Right lobe of liver (tissue), 6 donors: ENCODE measurements at regions of chr5 and their contacts with region 1.

Region 1: GRCh38 chr5:175700991-175701390 is 43.1 kb downstream of the HRH2 start:
- DNase-seq: peak in 2 of 3 donors; percentile 18 to 33
- ATAC-seq: no peak
- H3K4me3 ChIP-seq: no peak overlapping the region
- H3K27ac ChIP-seq: no peak overlapping the region
- H3K4me1 ChIP-seq: no peaks in the 10 kb centered on the region
- H3K27me3 ChIP-seq: no peaks in the 10 kb centered on the region
- CTCF ChIP-seq: peak; percentile 27 to 38 (median 34)
- POLR2A ChIP-seq: no peak

Region 2: GRCh38 chr5:175393897-175394296 is 307.1 kb before region 1 on chr5:
- intact Hi-C with region 1: no loop called
- DNase-seq: no peak
- ATAC-seq: no peak
- H3K4me3 ChIP-seq: no peak overlapping the region
- H3K27ac ChIP-seq: no peak overlapping the region
- H3K4me1 ChIP-seq: no peaks in the 10 kb centered on the region
- H3K27me3 ChIP-seq: no peaks in the 10 kb centered on the region
- CTCF ChIP-seq: no peak
- POLR2A ChIP-seq: no peak

Region 3: DNA sequence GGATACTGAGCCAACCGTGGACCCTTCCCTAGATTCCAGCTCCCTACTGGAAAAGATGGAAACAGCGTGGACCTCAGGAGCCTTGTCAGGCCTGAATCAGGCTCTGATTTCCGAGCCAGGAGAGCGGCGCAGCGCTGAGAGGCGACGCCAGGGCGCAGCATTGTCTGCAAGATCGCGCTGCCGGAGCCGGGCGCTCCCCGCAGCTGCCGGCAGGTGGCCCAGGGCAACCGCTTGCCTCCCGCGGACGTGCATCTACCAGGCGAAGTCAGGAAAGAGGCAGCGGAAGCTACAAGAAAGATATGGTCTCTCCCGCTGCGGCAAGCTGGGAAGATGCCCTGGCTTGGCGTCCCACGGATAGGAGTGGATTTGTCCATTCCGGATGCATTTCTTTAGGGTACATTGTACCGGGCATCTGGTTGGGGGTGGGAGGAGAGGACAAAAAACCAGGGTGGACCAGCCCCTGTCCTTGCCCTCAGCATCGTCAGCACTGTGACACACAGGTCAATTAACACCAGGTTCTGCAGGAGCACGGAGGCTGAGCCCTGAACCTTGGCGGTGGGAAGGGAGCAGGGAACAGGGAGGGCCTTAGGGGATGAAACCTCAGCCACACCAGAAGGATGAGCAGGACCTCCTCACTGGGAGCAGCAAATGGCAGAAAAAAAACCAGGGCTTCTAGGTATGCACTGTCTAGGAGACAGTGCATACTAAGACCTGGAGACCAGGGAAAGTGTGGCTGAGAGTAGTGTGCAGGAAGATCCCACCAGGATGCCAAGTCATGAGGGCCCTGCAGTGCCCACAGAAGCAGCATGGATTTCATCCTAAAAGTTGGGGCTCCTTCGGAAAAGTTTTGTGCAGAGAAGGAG is 166.7 kb before region 1 on chr5:
- intact Hi-C with region 1: loop called in 1 of 2 experiments (anchors 10 kb)
- DNase-seq: peak; percentile 76 to 86 (median 85)
- ATAC-seq: peak; percentile 97 to 100 (median 99)
- H3K4me3 ChIP-seq: no peak overlapping the region
- H3K27ac ChIP-seq: no peak overlapping the region
- H3K4me1 ChIP-seq: no peaks in the 10 kb centered on the region
- H3K27me3 ChIP-seq: no peaks in the 10 kb centered on the region
- CTCF ChIP-seq: peak; percentile 97 to 99 (median 99)
- POLR2A ChIP-seq: no peak

Region 4: DNA sequence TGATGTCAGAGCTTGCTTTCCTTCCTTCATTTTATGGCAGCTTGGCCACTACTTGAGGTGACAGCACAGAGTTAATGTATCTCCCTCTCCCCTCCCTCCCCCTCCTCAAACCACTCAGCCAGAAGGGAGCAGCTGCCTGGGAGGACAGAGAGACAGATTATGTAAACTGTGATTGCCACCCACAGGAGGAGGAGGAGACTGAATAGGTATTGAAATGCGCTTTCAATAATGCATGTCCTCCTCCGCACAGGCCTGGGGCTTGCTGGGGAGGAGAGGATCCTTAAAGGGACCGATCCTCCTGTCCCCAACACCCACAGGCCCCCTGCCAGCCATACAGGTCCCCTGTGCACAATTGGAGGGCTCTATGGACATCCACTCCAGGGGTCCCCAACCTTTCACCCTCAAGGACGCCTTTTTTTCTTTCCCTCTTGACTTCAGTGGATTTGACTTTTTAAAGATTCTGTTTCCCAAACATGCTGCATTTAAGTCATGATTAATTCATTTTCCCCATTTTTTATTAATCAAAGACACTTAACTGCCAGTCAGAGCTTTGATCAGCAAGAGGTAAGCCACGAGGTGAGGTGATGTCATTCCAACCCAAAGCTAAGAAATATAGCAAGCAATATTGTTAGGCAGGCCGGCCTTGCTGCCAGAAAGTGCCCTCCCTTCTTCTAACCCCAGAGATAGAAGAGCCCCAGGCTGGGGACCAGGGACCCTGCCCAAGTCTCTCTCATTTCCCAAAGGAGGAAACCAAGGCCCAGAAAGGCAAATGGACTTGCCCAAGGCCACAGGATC is 122.9 kb after region 1 on chr5:
- intact Hi-C with region 1: no loop called
- DNase-seq: no peak
- ATAC-seq: no peak
- H3K4me3 ChIP-seq: no peak overlapping the region
- H3K27ac ChIP-seq: no peak overlapping the region
- H3K4me1 ChIP-seq: no peaks in the 10 kb centered on the region
- H3K27me3 ChIP-seq: no peaks in the 10 kb centered on the region
- CTCF ChIP-seq: no peak
- POLR2A ChIP-seq: no peak